Sciatic nerve (tissue), 2 donors: ENCODE measurements at regions of chr2 and their contacts with region 1.

Region 1: GRCh38 chr2:217988014-217988839 is 14.6 kb downstream of the TNS1 start:
- DNase-seq: peak; percentile 95
- ATAC-seq: peak; percentile 84

Region 2: DNA sequence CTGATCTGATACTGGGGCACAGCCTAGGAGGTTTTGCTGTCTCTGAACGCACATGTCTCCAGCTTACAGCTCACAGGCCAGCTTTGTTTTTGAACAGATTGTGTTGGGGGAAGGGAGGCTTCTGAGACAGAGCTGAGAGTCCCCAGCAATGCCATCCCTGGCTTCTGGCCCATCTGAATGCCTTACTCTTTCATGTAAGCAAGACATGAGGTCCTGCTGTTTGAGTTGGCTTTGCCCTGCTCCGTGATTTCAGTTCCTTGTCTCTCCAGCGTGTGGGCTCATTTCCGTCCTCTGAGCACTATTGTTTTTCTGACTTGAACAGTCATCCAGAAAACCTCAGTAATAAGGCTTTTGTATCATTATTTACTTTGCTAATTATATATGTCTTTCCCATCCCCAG is 933.4 kb before region 1 on chr2:
- intact Hi-C with region 1: no loop called
- DNase-seq: no peak
- ATAC-seq: no peak

Region 3: GRCh38 chr2:217943446-217944389 is 44.5 kb before region 1 on chr2:
- intact Hi-C with region 1: loop called (anchors 5 kb)
- DNase-seq: peak; percentile 89
- ATAC-seq: peak; percentile 91